Posterior vena cava (tissue), 2 donors: ENCODE measurements at regions of chr1 and their contacts with region 1.

Region 1: DNA sequence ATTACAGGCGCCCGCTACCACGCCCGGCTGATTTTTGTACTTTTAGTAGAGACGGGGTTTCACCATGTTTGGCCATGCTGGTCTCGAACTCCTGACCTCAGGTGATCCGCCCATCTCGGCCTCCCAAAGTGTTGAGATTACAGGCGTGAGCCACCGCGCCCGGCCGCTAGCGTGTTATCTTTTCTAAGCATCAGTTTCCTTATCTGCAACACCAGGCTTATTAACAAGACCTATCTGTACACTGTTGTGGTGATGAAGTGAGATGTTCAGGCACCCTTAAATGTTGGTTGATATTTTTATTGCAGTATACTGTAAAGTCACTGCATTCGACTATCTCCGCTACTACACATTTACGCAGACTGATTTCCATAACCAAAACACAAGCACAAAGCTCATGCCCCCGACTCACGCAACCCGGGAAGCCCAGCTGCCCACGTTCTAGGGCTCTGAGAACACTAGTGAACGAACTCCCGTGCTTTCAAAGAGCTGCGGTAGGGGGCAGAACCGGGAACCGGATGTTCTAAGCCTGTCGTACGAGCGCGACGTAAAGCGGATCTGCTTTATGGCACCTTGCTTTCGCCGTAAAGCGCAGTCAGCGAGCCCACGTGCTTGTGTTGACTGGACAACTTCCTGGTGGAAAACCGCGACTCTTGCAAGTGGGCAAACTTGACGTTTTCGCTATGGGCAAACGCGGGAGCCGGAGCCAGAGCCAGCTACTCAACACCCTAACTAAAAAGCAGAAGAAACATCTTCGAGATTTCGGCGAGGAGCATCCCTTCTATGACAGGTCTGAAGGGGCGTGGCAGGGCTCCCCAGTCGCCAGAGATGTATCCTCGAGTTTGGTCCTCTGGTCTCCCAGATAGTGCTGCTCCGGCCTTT is at the start of gene UTP25:
- DNase-seq: peak; percentile 98
- total RNA-seq, gene UTP25: 6.4 to 19.1 TPM

Region 2: GRCh38 chr1:208868554-208868953 is 959.1 kb before region 1 on chr1:
- intact Hi-C with region 1: loop called in 1 of 2 experiments (anchors 10 kb)
- DNase-seq: no peak